ENCODE measurements at regions of chr16 and their contacts with region 1.

Region 1: GRCh38 chr16:4766874-4767628 is at the start of gene ZNF500:
- DNase-seq: peak; percentile 99
- H3K4me3 ChIP-seq: peak within 1 kb of the TSS; percentile 94 to 99
- H3K27ac ChIP-seq: peak within 1 kb of the TSS; percentile 87 to 96
- H3K4me1 ChIP-seq: peaks cover 19% of the 10 kb centered on the region
- H3K27me3 ChIP-seq: no peaks in the 10 kb centered on the region
- CTCF ChIP-seq: no peak
- POLR2A ChIP-seq: no peak
- total RNA-seq, gene ZNF500: 24.3 to 24.9 TPM

Region 2: GRCh38 chr16:4601036-4601863 is 165.8 kb before region 1 on chr16:
- intact Hi-C with region 1: loop called (anchors 10 kb)
- DNase-seq: peak; percentile 67
- H3K4me3 ChIP-seq: no peak overlapping the region
- H3K27ac ChIP-seq: no peak overlapping the region
- H3K4me1 ChIP-seq: no peaks in the 10 kb centered on the region
- H3K27me3 ChIP-seq: no peaks in the 10 kb centered on the region
- CTCF ChIP-seq: no peak
- POLR2A ChIP-seq: no peak